Activated T-helper 2 cell treated with anti-CD3 and anti-CD28 coated beads, Interferon-gamma antibody, Interleukin-2, Interleukin-4, amounts not matched to agents 10 μg/mL and 5 μg/mL and 100 μg/mL, durations not matched to agents 14 hours and 24 hours and 36 hours (primary cell): ENCODE measurements at regions of chr11 and their contacts with region 1.

Region 1: GRCh38 chr11:57667736-57668435 is at the start of gene ZDHHC5:
- DNase-seq: peak; percentile 100
- H3K4me3 Mint-ChIP-seq: peak within 1 kb of the TSS; percentile 99
- H3K27ac Mint-ChIP-seq: peak within 1 kb of the TSS; percentile 99
- H3K4me1 Mint-ChIP-seq: peaks cover 29% of the 10 kb centered on the region
- H3K27me3 Mint-ChIP-seq: no peaks in the 10 kb centered on the region
- total RNA-seq, gene ZDHHC5: 64.7 and 69.9 TPM in 2 replicates

Region 2: DNA sequence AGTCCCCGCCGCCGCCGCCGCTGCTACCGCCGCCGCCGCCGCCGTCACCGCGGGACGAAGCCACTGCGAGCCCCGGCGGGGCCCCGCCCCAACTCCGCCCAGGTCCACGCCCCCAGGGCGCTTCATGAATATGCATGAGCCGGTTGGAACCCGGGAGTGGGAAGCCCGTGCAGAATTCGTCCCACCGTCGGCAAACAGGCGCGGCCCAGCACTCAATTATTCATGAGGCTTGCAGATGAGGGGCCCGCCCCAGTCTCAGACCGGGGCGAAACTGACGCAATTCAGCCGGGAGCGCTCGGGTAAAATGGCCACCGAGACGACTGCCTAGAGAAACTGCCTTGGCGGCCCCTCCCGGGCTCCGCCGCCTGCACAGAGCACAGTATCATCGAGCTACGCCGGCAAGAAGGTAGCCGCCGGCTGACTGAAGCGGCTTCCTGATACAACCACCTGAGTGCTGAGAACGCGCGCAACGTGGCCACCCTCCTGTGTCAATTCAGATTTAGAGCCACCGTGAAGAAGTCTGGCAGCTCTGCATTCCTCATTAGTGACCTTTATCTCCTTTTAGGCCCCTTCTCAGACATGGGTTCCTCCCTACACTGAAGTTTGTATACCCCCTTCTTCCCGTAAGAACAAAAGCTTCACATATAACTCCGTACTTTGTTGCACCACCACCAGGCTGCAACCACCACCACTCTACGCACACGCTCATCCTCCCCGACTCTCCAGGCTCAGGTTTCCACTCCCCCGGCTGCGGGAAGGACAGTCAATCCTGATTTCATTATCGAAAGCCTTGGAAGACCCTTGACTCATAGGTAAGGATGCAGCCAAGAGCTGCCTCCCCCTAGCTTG is 342.8 kb before region 1 on chr11 and contains the start of gene TNKS1BP1:
- intact Hi-C with region 1: loop called (anchors 2 kb)
- DNase-seq: peak; percentile 86
- H3K4me3 Mint-ChIP-seq: peak within 1 kb of the TSS; percentile 84
- H3K27ac Mint-ChIP-seq: peak within 1 kb of the TSS; percentile 92
- H3K4me1 Mint-ChIP-seq: peaks cover 51% of the 10 kb centered on the region
- H3K27me3 Mint-ChIP-seq: no peaks in the 10 kb centered on the region
- total RNA-seq, gene TNKS1BP1: 15.6 and 16.5 TPM in 2 replicates

Region 3: GRCh38 chr11:57567515-57568329 is 100.2 kb before region 1 on chr11 and contains the start of gene UBE2L6:
- intact Hi-C with region 1: loop called (anchors 2 kb)
- DNase-seq: peak; percentile 56
- H3K4me3 Mint-ChIP-seq: peak within 1 kb of the TSS; percentile 99
- H3K27ac Mint-ChIP-seq: peak within 1 kb of the TSS; percentile 97
- H3K4me1 Mint-ChIP-seq: peaks cover 26% of the 10 kb centered on the region
- H3K27me3 Mint-ChIP-seq: no peaks in the 10 kb centered on the region
- total RNA-seq, gene UBE2L6: 135 and 137 TPM in 2 replicates

Region 4: GRCh38 chr11:57712256-57713150 is 44.6 kb after region 1 on chr11 and contains the start of gene TMX2:
- intact Hi-C with region 1: loop called (anchors 1 kb)
- DNase-seq: peak; percentile 90
- H3K4me3 Mint-ChIP-seq: peak within 1 kb of the TSS; percentile 99
- H3K27ac Mint-ChIP-seq: peak within 1 kb of the TSS; percentile 94
- H3K4me1 Mint-ChIP-seq: peaks cover 35% of the 10 kb centered on the region
- H3K27me3 Mint-ChIP-seq: no peaks in the 10 kb centered on the region
- total RNA-seq, gene TMX2: 74.6 and 80.0 TPM in 2 replicates

Region 5: DNA sequence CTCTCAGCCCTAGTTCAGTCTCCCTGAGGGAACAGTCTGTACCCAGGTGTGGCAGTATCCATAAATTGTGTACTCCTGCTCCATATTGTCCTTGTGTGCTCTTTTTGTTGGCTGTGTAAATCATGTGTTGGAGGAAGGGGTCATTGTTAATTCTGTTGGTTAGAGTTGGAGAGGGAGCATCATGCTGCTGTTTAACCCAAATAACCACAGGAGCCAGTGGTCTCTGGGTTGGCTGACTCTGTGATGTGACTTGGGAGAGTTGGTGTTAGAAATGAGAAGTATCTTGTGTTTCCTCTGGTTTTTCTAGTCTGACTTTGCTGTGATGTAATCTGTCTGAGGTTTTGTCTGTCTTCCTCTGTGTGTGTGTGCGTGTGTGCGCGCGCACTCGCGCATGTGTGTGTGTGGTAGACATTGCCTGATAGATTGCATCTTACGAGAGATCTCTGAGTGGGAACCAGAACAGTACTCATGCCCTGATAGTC is 124.2 kb after region 1 on chr11:
- intact Hi-C with region 1: loop called (anchors 1 kb)
- DNase-seq: peak; percentile 85
- H3K4me3 Mint-ChIP-seq: peak overlapping the region; percentile 45
- H3K27ac Mint-ChIP-seq: peak overlapping the region; percentile 68
- H3K4me1 Mint-ChIP-seq: peaks cover 40% of the 10 kb centered on the region
- H3K27me3 Mint-ChIP-seq: no peaks in the 10 kb centered on the region

Region 6: GRCh38 chr11:59142530-59143507 is 1474.9 kb after region 1 on chr11 and contains the start of gene FAM111A:
- intact Hi-C with region 1: loop called (anchors 10 kb)
- DNase-seq: peak; percentile 87
- H3K4me3 Mint-ChIP-seq: peak within 1 kb of the TSS; percentile 94
- H3K27ac Mint-ChIP-seq: peak within 1 kb of the TSS; percentile 95
- H3K4me1 Mint-ChIP-seq: peaks cover 57% of the 10 kb centered on the region
- H3K27me3 Mint-ChIP-seq: no peaks in the 10 kb centered on the region
- total RNA-seq, gene FAM111A: 66.2 and 69.1 TPM in 2 replicates